ENCODE measurements at regions of chr17 and their contacts with region 1.

Region 1: GRCh38 chr17:61551255-61551742 is 39.7 kb downstream of the NACA2 start:
- DNase-seq: peak; percentile 68 to 77
- ATAC-seq: peak; percentile 87 to 91; a peak in 5 of 6 replicates
- H3K4me3 ChIP-seq: no peak overlapping the region
- H3K27ac ChIP-seq: peak overlapping the region; percentile 69 to 70
- H3K4me1 ChIP-seq: peaks cover 18% of the 10 kb centered on the region
- CTCF ChIP-seq: peak; percentile 97
- EP300 ChIP-seq: no peak
- POLR2A ChIP-seq: no peak
- RAD21 ChIP-seq: peak; percentile 95 to 96

Region 2: GRCh38 chr17:61340431-61341209 is 210.7 kb before region 1 on chr17:
- CTCF ChIA-PET with region 1: no interaction called
- POLR2A ChIA-PET with region 1: no interaction called
- DNase-seq: no peak
- ATAC-seq: no peak
- H3K4me3 ChIP-seq: no peak overlapping the region
- H3K27ac ChIP-seq: no peak overlapping the region
- H3K4me1 ChIP-seq: peaks cover 33% of the 10 kb centered on the region
- CTCF ChIP-seq: no peak
- EP300 ChIP-seq: no peak
- POLR2A ChIP-seq: no peak
- RAD21 ChIP-seq: no peak

Region 3: GRCh38 chr17:61420052-61420451 is 131.2 kb before region 1 on chr17:
- CTCF ChIA-PET with region 1: interaction called, 116 read pairs
- POLR2A ChIA-PET with region 1: interaction called, 3 read pairs
- DNase-seq: no peak
- ATAC-seq: no peak
- H3K4me3 ChIP-seq: no peak overlapping the region
- H3K27ac ChIP-seq: peak overlapping the region in 1 of 2 experiments; percentile 4; a peak in 1 of 6 replicates
- H3K4me1 ChIP-seq: peaks cover 11% of the 10 kb centered on the region; the same call in 2 of the 3 replicates
- CTCF ChIP-seq: no peak
- EP300 ChIP-seq: no peak
- POLR2A ChIP-seq: no peak
- RAD21 ChIP-seq: no peak

Region 4: GRCh38 chr17:61426013-61426730 is 125.1 kb before region 1 on chr17:
- CTCF ChIA-PET with region 1: interaction called, 17 read pairs
- POLR2A ChIA-PET with region 1: no interaction called
- DNase-seq: peak in 1 of 2 experiments; percentile 69
- ATAC-seq: peak; percentile 55 to 78; a peak in 5 of 6 replicates
- H3K4me3 ChIP-seq: no peak overlapping the region
- H3K27ac ChIP-seq: peak overlapping the region; percentile 63 to 69
- H3K4me1 ChIP-seq: peaks cover 25% of the 10 kb centered on the region
- CTCF ChIP-seq: peak; percentile 41; the same call in 2 of the 3 replicates
- EP300 ChIP-seq: no peak
- POLR2A ChIP-seq: no peak
- RAD21 ChIP-seq: peak; percentile 45 to 79; a peak in 4 of 5 replicates

Region 5: GRCh38 chr17:61538480-61538879 is 12.8 kb before region 1 on chr17:
- CTCF ChIA-PET with region 1: interaction called, 11 read pairs
- POLR2A ChIA-PET with region 1: no interaction called
- DNase-seq: no peak
- ATAC-seq: no peak
- H3K4me3 ChIP-seq: no peak overlapping the region
- H3K27ac ChIP-seq: no peak overlapping the region
- H3K4me1 ChIP-seq: no peaks in the 10 kb centered on the region
- CTCF ChIP-seq: no peak
- EP300 ChIP-seq: no peak
- POLR2A ChIP-seq: no peak
- RAD21 ChIP-seq: no peak

Region 6: DNA sequence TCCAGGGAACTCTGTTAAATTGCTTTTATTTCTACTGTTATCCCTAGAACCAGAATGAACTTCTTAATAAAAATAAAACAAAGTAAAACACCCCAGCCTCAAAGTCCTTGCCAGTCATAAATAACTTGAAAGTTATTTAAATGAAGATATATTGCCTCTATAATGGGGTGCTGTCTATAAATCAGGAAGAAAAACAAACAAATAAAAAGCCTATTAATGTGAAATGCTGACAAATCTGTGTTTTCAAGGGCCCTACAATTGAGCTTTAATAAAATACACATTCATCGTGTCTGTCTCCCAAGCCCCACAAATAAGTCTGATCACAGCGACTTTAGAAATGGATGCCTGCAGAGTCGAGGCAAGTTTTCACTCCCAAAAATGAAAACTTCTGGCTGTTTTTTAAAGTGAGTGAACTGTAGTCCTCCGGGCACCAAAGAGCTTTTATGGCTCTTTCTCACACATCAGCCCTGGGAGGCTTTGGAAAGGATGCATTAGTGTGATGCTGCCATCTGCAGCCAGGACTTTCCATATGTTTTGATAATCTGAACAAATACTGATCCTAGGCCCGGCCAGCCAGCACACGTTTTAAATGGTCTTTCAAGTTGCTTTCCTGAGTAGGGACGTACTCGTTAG is 23.4 kb after region 1 on chr17:
- CTCF ChIA-PET with region 1: interaction called, 15 read pairs
- POLR2A ChIA-PET with region 1: interaction called, 12 read pairs
- DNase-seq: peak; percentile 80 to 88
- ATAC-seq: peak; percentile 98 to 99
- H3K4me3 ChIP-seq: no peak overlapping the region
- H3K27ac ChIP-seq: peak overlapping the region; percentile 57 to 72
- H3K4me1 ChIP-seq: peaks cover 16% of the 10 kb centered on the region
- CTCF ChIP-seq: peak; percentile 89
- EP300 ChIP-seq: no peak
- POLR2A ChIP-seq: no peak
- RAD21 ChIP-seq: peak; percentile 98